ENCODE measurements at regions of chr3 and their contacts with region 1.

Region 1: GRCh38 chr3:33277193-33277882 is at the start of gene FBXL2:
- DNase-seq: peak; percentile 58
- H3K4me3 Mint-ChIP-seq: peak within 1 kb of the TSS; percentile 28
- H3K27ac Mint-ChIP-seq: no peak within 1 kb of the TSS
- H3K4me1 Mint-ChIP-seq: no peaks in the 10 kb centered on the region
- H3K27me3 Mint-ChIP-seq: peaks cover 39% of the 10 kb centered on the region
- total RNA-seq, gene FBXL2: not detected in 2 replicates

Region 2: GRCh38 chr3:33074217-33075067 is 202.9 kb before region 1 on chr3:
- intact Hi-C with region 1: no loop called
- DNase-seq: peak; percentile 89
- H3K4me3 Mint-ChIP-seq: no peak overlapping the region
- H3K27ac Mint-ChIP-seq: peak overlapping the region; percentile 64
- H3K4me1 Mint-ChIP-seq: peaks cover 25% of the 10 kb centered on the region
- H3K27me3 Mint-ChIP-seq: no peaks in the 10 kb centered on the region

Region 3: GRCh38 chr3:33209357-33209756 is 68.0 kb before region 1 on chr3:
- intact Hi-C with region 1: loop called (anchors 5 kb)
- DNase-seq: no peak
- H3K4me3 Mint-ChIP-seq: no peak overlapping the region
- H3K27ac Mint-ChIP-seq: no peak overlapping the region
- H3K4me1 Mint-ChIP-seq: no peaks in the 10 kb centered on the region
- H3K27me3 Mint-ChIP-seq: peaks cover 32% of the 10 kb centered on the region

Measured in activated CD4-positive, alpha-beta T cell treated with anti-CD3 and anti-CD28 coated beads, Interleukin-2, amount 10 ng/mL, durations not matched to agents 24 days and 14 days (primary cell).